ENCODE measurements at regions of chr17 and their contacts with region 1.

Region 1: DNA sequence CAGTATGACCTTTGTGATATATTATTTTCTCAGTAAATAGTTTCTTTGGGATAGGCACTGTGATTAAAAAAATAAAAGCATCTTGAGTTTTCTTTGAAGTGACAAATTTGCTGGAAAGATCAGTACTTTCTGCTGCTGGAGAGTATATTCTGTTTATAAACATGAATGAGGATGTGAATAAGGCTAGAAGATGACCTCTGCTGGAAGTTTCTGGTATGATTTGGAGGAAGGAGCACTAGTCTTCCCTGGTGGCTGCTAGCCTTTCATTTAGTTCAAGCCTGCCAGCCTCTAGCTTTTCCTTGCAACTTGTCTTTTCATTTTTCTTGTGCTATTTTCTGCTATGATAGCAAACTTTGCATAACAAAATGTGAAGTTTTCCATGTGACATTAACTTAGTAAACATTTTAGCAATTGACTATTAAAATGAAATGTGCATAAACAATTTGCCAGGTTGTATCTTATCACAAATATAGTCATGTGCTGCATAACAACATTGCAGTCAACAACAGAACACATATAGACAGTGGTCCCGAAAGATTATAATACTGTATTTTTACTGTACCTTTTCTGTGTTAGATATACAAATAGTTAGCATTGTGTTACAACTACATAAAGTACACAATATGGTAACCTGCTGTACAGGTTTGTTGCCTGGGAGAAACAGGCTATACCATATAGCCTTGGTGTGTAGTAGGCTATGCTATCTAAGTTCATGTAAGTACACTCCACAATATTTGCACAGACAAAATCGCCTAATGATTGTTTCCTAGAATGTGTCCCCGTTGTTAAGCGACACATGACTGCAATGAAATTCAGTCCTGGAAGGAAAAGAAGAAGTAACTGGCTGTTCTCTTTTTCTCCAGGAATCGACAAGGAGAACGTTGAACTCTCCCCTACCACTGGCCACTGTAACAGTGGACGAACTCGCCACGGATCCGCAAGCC is 18.1 kb upstream of the RAB11FIP4 start:
- H3K4me3 Mint-ChIP-seq: peak overlapping the region; percentile 37
- H3K27ac Mint-ChIP-seq: peak overlapping the region; percentile 79
- H3K4me1 Mint-ChIP-seq: peaks cover 28% of the 10 kb centered on the region
- H3K27me3 Mint-ChIP-seq: no peaks in the 10 kb centered on the region

Region 2: GRCh38 chr17:31085563-31085962 is 287.9 kb before region 1 on chr17:
- intact Hi-C with region 1: loop called (anchors 5 kb)
- H3K4me3 Mint-ChIP-seq: no peak overlapping the region
- H3K27ac Mint-ChIP-seq: no peak overlapping the region
- H3K4me1 Mint-ChIP-seq: peaks cover 12% of the 10 kb centered on the region
- H3K27me3 Mint-ChIP-seq: no peaks in the 10 kb centered on the region

Region 3: DNA sequence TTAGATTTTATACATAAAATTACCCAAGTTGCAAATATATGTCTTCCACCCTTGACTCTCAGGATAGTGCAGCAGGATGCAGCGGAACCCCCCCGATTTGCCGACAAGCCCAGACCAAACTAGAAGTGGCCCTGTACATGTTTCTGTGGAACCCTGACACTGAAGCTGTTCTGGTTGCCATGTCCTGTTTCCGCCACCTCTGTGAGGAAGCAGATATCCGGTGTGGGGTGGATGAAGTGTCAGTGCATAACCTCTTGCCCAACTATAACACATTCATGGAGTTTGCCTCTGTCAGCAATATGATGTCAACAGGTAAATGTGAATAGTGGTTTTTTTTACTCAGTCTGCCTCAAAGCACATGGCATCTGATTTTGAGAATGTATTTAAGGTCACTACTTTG is 147.0 kb before region 1 on chr17:
- intact Hi-C with region 1: loop called (anchors 10 kb)
- H3K4me3 Mint-ChIP-seq: no peak overlapping the region
- H3K27ac Mint-ChIP-seq: no peak overlapping the region
- H3K4me1 Mint-ChIP-seq: peaks cover 9% of the 10 kb centered on the region
- H3K27me3 Mint-ChIP-seq: no peaks in the 10 kb centered on the region

Region 4: DNA sequence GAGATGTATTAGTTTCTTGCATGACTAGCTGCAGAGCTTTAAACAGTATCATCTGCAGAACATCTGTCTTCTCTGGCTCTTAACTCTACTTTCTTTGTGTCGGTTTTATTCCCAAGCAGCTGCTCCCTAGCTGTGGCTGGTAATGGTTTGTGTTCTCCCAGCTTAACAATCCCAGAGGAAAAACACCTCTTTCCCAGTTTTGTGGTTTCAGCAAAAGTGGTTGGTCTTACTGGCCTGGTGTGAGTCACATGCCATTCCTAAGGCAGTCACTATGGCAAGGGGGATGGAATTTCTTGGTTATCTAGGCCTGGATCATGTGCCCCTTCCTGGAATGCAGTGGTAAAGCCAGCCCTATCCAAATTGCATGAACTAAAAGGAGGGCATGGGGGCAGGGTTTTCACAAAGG is 103.8 kb before region 1 on chr17:
- intact Hi-C with region 1: loop called (anchors 5 kb)
- H3K4me3 Mint-ChIP-seq: no peak overlapping the region
- H3K27ac Mint-ChIP-seq: no peak overlapping the region
- H3K4me1 Mint-ChIP-seq: peaks cover 27% of the 10 kb centered on the region
- H3K27me3 Mint-ChIP-seq: no peaks in the 10 kb centered on the region

Region 5: GRCh38 chr17:31309556-31309955 is 63.9 kb before region 1 on chr17:
- intact Hi-C with region 1: loop called (anchors 10 kb)
- H3K4me3 Mint-ChIP-seq: peak overlapping the region; percentile 84
- H3K27ac Mint-ChIP-seq: peak overlapping the region; percentile 97
- H3K4me1 Mint-ChIP-seq: peaks cover 52% of the 10 kb centered on the region
- H3K27me3 Mint-ChIP-seq: no peaks in the 10 kb centered on the region

Region 6: GRCh38 chr17:31321481-31321880 is 51.9 kb before region 1 on chr17 and contains the start of gene EVI2A:
- intact Hi-C with region 1: loop called (anchors 5 kb)
- H3K4me3 Mint-ChIP-seq: peak within 1 kb of the TSS; percentile 69
- H3K27ac Mint-ChIP-seq: peak within 1 kb of the TSS; percentile 87
- H3K4me1 Mint-ChIP-seq: peaks cover 28% of the 10 kb centered on the region
- H3K27me3 Mint-ChIP-seq: no peaks in the 10 kb centered on the region

Region 7: GRCh38 chr17:31339906-31340661 is 33.3 kb before region 1 on chr17:
- intact Hi-C with region 1: no loop called
- H3K4me3 Mint-ChIP-seq: no peak overlapping the region
- H3K27ac Mint-ChIP-seq: no peak overlapping the region
- H3K4me1 Mint-ChIP-seq: peaks cover 11% of the 10 kb centered on the region
- H3K27me3 Mint-ChIP-seq: no peaks in the 10 kb centered on the region